ENCODE measurements at regions of chr2 and their contacts with region 1.

Region 1: DNA sequence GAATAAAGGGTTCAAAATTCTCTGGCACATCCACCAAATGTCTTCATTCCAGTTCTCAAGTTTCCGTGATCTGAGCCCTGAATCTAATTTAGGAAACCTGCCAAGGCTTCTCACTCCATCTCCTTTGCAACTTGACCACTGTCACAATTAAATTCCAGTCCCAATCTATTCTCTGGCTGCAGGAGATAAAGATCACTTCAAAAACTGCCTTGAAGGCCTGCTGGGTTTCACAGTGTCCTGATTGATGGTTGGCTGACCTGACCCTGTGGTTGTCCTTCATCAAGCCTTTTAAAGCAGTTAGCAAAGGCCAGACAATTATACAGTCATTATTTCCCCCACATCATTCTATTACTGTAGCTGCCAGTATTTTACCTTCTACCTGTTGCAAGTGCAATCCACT is 60.3 kb upstream of the DNAJC10 start:
- DNase-seq: no peak
- H3K4me3 ChIP-seq: no peak overlapping the region
- H3K27me3 ChIP-seq: no peaks in the 10 kb centered on the region; the same call in none of the 2 replicates
- CTCF ChIP-seq: no peak

Region 2: DNA sequence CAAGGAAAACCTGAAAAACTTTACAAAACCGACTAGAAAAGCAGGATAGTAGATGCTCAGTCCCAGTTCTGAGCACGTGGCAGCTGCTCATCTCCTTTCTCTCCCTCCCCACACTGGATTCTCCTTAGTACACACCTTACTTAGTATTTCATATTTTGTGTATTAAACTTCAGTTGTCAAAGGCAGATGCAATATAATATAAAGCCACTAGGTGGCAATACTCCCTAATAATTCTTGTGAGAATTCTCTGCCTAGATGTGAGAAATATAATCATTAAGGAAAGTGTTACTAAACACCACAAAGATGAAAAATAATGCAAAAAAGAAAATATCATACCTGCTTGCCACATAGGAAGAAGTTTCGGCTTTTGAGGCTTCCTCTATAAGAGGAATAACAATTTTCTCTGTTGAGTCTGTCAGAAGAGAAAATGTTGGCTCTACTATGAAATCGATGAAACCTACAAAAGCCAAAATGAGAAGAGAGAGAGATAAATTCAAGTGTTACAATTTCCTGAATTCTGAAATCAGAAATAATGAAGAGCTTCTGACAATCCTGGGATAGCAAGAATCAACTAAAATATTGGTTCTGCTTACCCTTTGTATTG is 469.5 kb before region 1 on chr2:
- CTCF ChIA-PET with region 1: interaction called, 22 read pairs
- POLR2A ChIA-PET with region 1: no interaction called
- DNase-seq: no peak
- H3K4me3 ChIP-seq: no peak overlapping the region
- H3K27me3 ChIP-seq: no peaks in the 10 kb centered on the region
- CTCF ChIP-seq: peak; percentile 44

Measured in BJ (cell line).